Calu3 (cell line): ENCODE measurements at regions of chr3 and their contacts with region 1.

Region 1: GRCh38 chr3:101189796-101190195 is 130.6 kb downstream of the IMPG2 start:
- DNase-seq: no peak
- H3K4me3 Mint-ChIP-seq: no peak overlapping the region
- H3K27ac Mint-ChIP-seq: no peak overlapping the region
- H3K4me1 Mint-ChIP-seq: peaks cover 32% of the 10 kb centered on the region
- H3K27me3 Mint-ChIP-seq: no peaks in the 10 kb centered on the region
- CTCF ChIP-seq: no peak

Region 2: DNA sequence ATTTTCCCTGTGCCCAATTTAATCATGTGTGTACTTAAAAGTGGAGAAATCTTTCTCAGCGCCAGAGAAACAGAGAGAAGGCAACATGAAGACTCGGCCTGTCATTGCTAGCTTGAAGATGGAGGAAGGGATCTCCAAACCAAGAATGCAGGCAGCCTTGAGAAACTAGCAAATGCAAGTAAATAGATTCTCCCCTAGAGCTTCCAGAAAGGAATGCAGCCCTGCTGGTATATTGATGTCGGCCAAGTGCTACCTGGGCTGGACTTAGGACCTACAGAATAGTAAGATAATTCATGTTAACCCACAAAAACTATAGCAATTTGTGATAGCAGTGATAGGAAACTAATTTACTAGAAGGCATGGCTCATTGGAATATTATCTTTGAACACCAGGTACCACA is 45.7 kb before region 1 on chr3:
- CTCF ChIA-PET with region 1: no interaction called
- intact Hi-C with region 1: loop called (anchors 1 kb)
- DNase-seq: peak; percentile 46
- H3K4me3 Mint-ChIP-seq: no peak overlapping the region
- H3K27ac Mint-ChIP-seq: no peak overlapping the region
- H3K4me1 Mint-ChIP-seq: peaks cover 58% of the 10 kb centered on the region
- H3K27me3 Mint-ChIP-seq: no peaks in the 10 kb centered on the region
- CTCF ChIP-seq: no peak